A673 (cell line): ENCODE measurements at regions of chr6 and their contacts with region 1.

Region 1: GRCh38 chr6:128172752-128173682 is 272.2 kb upstream of the THEMIS start:
- DNase-seq: no peak
- H3K4me3 ChIP-seq: no peak overlapping the region
- H3K27ac ChIP-seq: no peak overlapping the region
- H3K4me1 ChIP-seq: no peaks in the 10 kb centered on the region
- H3K27me3 ChIP-seq: no peaks in the 10 kb centered on the region
- CTCF ChIP-seq: no peak

Region 2: GRCh38 chr6:127851197-127851596 is 321.8 kb before region 1 on chr6:
- CTCF ChIA-PET with region 1: no interaction called
- POLR2A ChIA-PET with region 1: no interaction called
- intact Hi-C with region 1: no loop called
- DNase-seq: no peak
- H3K4me3 ChIP-seq: no peak overlapping the region
- H3K27ac ChIP-seq: no peak overlapping the region
- H3K4me1 ChIP-seq: peaks cover 5% of the 10 kb centered on the region
- H3K27me3 ChIP-seq: no peaks in the 10 kb centered on the region
- CTCF ChIP-seq: no peak

Region 3: GRCh38 chr6:127879685-127880084 is 293.3 kb before region 1 on chr6:
- CTCF ChIA-PET with region 1: no interaction called
- POLR2A ChIA-PET with region 1: no interaction called
- intact Hi-C with region 1: no loop called
- DNase-seq: no peak
- H3K4me3 ChIP-seq: no peak overlapping the region
- H3K27ac ChIP-seq: no peak overlapping the region
- H3K4me1 ChIP-seq: no peaks in the 10 kb centered on the region
- H3K27me3 ChIP-seq: no peaks in the 10 kb centered on the region
- CTCF ChIP-seq: no peak

Region 4: GRCh38 chr6:128508588-128509296 is 335.7 kb after region 1 on chr6:
- CTCF ChIA-PET with region 1: interaction called, 11 read pairs
- POLR2A ChIA-PET with region 1: no interaction called
- intact Hi-C with region 1: no loop called
- DNase-seq: peak; percentile 62
- H3K4me3 ChIP-seq: no peak overlapping the region
- H3K27ac ChIP-seq: no peak overlapping the region
- H3K4me1 ChIP-seq: peaks cover 41% of the 10 kb centered on the region
- H3K27me3 ChIP-seq: no peaks in the 10 kb centered on the region
- CTCF ChIP-seq: no peak